Activated B cell treated with CpG ODN at 0.5 μM for 24 hours (primary cell): ENCODE measurements at regions of chr14 and their contacts with region 1.

Region 1: GRCh38 chr14:55546212-55546874 is 33.7 kb upstream of the KTN1 start:
- DNase-seq: no peak
- ATAC-seq: peak; percentile 34
- H3K4me3 Mint-ChIP-seq: no peak overlapping the region
- H3K27ac Mint-ChIP-seq: peak overlapping the region; percentile 73
- H3K4me1 Mint-ChIP-seq: peaks cover 12% of the 10 kb centered on the region
- H3K27me3 Mint-ChIP-seq: no peaks in the 10 kb centered on the region
- CTCF ChIP-seq: no peak

Region 2: GRCh38 chr14:55477680-55478079 is 68.7 kb before region 1 on chr14:
- CTCF ChIA-PET with region 1: no interaction called
- POLR2A ChIA-PET with region 1: no interaction called
- intact Hi-C with region 1: no loop called
- DNase-seq: no peak
- ATAC-seq: no peak
- H3K4me3 Mint-ChIP-seq: no peak overlapping the region
- H3K27ac Mint-ChIP-seq: no peak overlapping the region
- H3K4me1 Mint-ChIP-seq: no peaks in the 10 kb centered on the region
- H3K27me3 Mint-ChIP-seq: no peaks in the 10 kb centered on the region
- CTCF ChIP-seq: no peak

Region 3: GRCh38 chr14:55585854-55586253 is 39.5 kb after region 1 on chr14:
- CTCF ChIA-PET with region 1: no interaction called
- POLR2A ChIA-PET with region 1: no interaction called
- intact Hi-C with region 1: loop called (anchors 1 kb)
- DNase-seq: no peak
- ATAC-seq: no peak
- H3K4me3 Mint-ChIP-seq: no peak overlapping the region
- H3K27ac Mint-ChIP-seq: no peak overlapping the region
- H3K4me1 Mint-ChIP-seq: peaks cover 65% of the 10 kb centered on the region
- H3K27me3 Mint-ChIP-seq: no peaks in the 10 kb centered on the region
- CTCF ChIP-seq: no peak

Region 4: GRCh38 chr14:55701638-55702037 is 155.3 kb after region 1 on chr14:
- CTCF ChIA-PET with region 1: no interaction called
- POLR2A ChIA-PET with region 1: no interaction called
- intact Hi-C with region 1: no loop called
- DNase-seq: no peak
- ATAC-seq: peak; percentile 95
- H3K4me3 Mint-ChIP-seq: no peak overlapping the region
- H3K27ac Mint-ChIP-seq: no peak overlapping the region
- H3K4me1 Mint-ChIP-seq: peaks cover 16% of the 10 kb centered on the region
- H3K27me3 Mint-ChIP-seq: no peaks in the 10 kb centered on the region
- CTCF ChIP-seq: no peak